Dendritic cell treated with granulocyte-macrophage colony-stimulating factor and Interleukin-4, amounts not matched to agents 40 ng/mL and 50 ng/mL, for 4 days (primary cell): ENCODE measurements at regions of chr2 and their contacts with region 1.

Region 1: DNA sequence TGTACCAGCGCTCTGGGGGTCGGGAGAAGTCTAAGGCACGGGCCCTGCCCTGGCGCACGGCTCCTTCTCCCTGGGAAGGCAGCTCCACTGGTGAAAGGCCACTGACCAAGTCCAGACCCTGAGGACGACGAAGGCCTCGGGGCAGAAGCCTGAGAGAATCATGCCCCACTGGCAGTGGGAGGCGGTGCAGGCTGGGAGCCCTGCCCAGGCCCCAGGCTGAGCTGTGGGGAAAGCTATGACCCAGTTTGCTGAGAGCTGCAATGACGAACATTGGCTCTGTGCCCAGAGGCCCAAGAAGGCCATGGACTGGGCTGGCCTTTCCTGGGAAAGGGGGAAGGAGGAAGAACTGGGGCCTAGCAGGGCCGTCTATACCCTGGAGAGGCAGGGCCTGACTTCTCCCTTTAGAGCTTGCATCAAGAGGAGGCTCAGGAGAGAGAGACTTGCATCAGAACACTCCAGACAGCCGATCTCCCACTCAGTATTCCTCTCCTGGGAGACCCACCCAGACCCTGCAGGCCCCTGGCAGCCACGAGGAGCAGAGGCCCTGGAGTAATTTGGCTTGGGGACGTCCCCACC is 32.9 kb downstream of the HS1BP3 start:
- H3K4me3 Mint-ChIP-seq: peak overlapping the region; percentile 26
- H3K27ac Mint-ChIP-seq: peak overlapping the region; percentile 86
- H3K4me1 Mint-ChIP-seq: peaks cover 56% of the 10 kb centered on the region
- H3K27me3 Mint-ChIP-seq: no peaks in the 10 kb centered on the region

Region 2: GRCh38 chr2:20595431-20596192 is 22.4 kb before region 1 on chr2:
- intact Hi-C with region 1: no loop called
- H3K4me3 Mint-ChIP-seq: no peak overlapping the region
- H3K27ac Mint-ChIP-seq: peak overlapping the region; percentile 22
- H3K4me1 Mint-ChIP-seq: peaks cover 65% of the 10 kb centered on the region
- H3K27me3 Mint-ChIP-seq: no peaks in the 10 kb centered on the region

Region 3: DNA sequence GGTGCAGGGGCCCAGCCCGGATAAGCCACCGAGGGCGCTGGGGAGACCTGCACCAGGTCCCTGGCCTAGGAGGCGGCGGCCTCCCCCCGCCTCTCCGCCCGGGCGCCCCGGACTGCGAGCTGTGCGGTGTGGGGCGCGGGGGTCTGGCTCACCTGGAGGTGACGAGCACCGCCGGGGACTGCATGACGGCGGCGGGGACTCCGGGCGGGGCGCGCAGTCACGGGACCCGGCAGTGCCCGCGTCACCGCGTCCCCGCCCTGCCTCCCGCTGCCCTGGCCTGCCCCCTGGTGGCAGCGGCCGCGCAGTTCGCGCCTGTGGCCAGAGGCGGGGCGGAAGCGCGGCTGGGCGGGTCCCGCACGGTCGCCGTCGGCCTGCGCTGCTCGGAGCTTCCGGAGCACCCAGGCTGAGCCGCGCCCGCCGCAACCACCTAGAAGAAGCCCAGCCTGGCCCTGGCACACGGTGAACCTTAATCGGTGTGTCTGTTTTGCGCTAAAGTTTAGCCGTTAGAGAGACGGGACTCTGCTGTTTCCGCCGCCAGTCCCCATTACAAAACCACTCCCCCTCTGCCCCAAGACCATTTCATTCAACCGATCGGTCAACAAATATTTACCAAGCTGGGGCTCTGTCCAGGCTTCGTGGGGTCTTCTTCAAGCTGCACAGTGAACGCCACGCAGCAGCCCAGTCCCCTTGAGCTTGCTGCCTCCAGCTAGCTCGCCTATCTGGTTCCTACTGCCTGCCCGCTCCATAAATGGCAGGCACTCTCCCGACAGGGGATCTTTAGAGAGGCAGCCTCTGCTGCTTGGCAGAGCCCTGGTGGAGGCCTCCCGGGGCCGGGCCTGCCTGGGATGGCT is 33.1 kb after region 1 on chr2 and contains the start of gene HS1BP3:
- intact Hi-C with region 1: loop called (anchors 2 kb)
- H3K4me3 Mint-ChIP-seq: peak within 1 kb of the TSS; percentile 96
- H3K27ac Mint-ChIP-seq: peak within 1 kb of the TSS; percentile 90
- H3K4me1 Mint-ChIP-seq: peaks cover 36% of the 10 kb centered on the region
- H3K27me3 Mint-ChIP-seq: peaks cover 5% of the 10 kb centered on the region